Activated naive CD4-positive, alpha-beta T cell treated with anti-CD3 and anti-CD28 coated beads for 36 hours (primary cell): ENCODE measurements at regions of chr9 and their contacts with region 1.

Region 1: DNA sequence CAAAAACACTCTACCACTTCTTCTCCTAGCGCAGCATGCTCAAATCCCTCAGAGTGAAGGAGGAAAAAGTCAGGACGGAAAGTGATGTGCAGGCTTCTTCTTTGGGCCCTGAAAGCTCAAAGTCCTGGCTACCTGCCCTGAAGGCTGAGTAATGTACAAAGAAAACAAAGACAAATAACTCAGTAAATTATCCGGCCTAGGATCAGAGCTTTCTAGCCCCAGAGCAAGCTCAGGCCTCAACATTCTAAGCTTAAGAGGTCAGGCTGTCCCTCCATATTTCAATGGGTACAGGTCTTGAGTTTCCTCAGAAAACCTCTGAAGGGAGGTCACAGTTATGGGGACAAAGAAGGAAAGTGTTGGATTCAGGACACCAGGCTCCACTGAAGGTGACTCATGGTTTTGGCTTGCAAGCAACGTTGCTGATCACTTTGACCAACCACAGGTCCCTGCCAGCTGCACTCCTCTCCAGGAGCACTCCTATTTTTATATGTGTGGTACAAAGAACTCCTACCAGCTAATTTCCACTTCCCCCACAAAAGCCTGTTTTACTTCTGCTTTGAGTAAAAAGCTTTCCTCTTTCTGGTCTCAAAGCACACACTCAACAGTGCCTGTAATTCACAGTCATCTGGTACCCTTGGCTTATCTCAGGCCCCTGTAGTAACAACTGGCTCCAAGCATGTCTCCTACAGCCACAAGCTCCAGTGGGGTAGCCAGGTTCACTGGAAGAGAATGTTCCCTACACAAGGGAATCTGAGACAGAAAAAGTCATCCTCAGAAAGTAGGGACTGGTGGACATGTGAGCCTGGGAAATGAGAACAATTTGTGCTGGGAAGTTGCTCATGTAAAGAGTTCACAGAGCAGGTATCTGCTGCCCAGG is 115.7 kb downstream of the UGCG start:
- DNase-seq: peak; percentile 33
- H3K4me3 Mint-ChIP-seq: no peak overlapping the region
- H3K27ac Mint-ChIP-seq: peak overlapping the region; percentile 12
- H3K4me1 Mint-ChIP-seq: peaks cover 26% of the 10 kb centered on the region
- H3K27me3 Mint-ChIP-seq: no peaks in the 10 kb centered on the region

Region 2: DNA sequence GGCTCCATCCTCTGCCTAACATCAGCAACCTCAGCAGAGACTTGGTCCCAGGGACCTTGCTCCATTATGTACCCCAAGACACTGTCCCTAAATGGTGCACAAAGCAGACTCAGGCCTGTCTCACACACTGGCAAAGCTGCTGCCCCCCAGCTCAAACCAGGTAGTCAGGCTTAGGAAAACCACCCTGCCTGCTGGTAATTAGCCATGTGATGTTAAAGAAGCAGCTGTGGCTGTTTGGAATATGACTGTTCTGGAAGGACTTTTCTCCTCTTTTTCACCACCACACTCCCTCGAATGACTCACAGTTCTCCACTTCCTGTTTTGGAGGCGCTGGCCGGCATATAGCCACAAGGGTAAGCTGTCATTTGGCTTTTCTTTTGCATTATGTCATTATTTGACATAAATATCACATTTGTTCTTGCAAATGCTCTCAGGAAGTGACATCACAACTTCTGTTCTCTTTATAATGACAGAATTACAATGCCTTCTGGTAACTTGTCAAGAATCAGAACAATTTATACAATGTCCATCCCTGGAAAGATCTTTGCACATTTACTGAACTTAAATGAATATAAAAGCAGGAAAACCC is 49.0 kb after region 1 on chr9:
- CTCF ChIA-PET with region 1: no interaction called
- intact Hi-C with region 1: loop called (anchors 2 kb)
- DNase-seq: peak; percentile 64
- H3K4me3 Mint-ChIP-seq: no peak overlapping the region
- H3K27ac Mint-ChIP-seq: no peak overlapping the region
- H3K4me1 Mint-ChIP-seq: peaks cover 22% of the 10 kb centered on the region
- H3K27me3 Mint-ChIP-seq: no peaks in the 10 kb centered on the region

Region 3: DNA sequence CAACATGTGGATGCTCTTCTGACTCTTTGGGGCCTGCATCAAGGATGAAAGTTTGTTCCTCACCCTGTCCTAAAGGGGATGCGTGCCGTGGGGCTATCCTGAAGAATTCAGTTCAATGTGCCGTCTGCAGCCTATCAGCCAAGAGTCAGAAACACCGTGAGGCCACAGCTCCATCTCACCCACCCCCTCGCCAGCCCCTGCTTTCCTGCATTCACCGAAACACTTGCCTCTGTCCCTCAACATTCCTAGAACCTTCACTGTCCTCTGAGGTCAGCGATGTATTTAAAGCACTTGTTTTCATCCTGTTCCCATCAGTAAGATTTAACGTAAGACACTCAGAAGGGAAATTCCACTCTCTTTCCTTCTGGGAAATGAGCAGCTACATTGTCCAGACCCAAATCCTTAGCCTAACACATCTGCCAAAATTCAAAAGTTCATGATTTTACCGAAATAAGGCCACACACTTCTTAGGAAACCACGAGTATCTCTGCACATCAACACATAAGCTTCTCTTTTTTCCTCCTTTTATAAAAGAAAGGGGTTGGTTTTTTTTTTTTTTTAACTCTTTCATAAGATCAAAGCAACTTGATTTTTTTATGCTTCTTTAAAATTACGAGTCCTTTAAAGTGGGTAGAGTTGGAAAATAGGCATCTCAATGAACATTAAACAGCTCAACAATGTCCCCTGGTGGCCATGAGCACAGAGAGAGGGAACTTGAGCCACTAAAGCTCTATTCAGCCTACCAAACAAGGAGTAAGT is 62.2 kb after region 1 on chr9:
- CTCF ChIA-PET with region 1: no interaction called
- intact Hi-C with region 1: no loop called
- DNase-seq: peak; percentile 85
- H3K4me3 Mint-ChIP-seq: no peak overlapping the region
- H3K27ac Mint-ChIP-seq: no peak overlapping the region
- H3K4me1 Mint-ChIP-seq: peaks cover 28% of the 10 kb centered on the region
- H3K27me3 Mint-ChIP-seq: no peaks in the 10 kb centered on the region